Activated CD8-positive, alpha-beta T cell treated with anti-CD3 and anti-CD28 coated beads, Interleukin-2, amount 10 ng/mL, durations not matched to agents 7 days and 5 days (primary cell): ENCODE measurements at regions of chr7 and their contacts with region 1.

Region 1: DNA sequence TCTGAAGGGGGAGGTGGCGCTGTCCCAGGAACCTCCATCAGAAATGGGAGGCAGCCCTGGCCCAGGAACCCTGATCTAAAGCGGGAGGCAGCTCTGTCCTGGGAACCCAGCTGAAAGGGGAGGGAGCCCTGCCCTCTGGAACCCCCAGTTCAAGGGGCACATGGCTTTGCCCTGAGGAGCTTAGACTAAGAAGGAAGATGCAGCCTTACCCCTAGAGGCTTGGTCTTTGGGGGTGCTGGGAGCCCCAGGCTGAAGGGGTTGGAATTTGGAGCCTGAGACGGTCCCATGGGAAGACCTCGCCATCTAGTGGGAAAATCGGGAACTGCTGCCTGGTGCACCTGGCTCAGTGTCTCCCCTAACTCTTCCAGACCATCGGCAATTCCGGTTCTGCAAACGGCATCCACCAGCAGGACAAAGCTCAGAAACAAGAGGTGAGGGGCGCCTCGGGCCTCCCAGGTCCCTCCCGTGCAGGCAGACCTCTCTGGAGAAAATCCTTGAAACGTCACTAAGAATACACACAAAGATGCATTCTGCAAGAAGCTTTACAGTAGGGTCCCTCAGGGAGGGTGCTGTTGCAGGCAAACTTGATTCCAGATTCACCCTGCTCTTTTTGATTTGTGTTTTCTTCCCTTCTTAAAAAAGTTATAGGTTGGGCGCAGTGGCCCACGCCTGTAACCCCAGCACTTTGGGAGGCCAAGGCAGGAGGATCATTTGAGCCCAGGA is 52.4 kb upstream of the GTF2IRD1 start:
- DNase-seq: peak; percentile 78
- ATAC-seq: peak; percentile 59
- H3K4me3 Mint-ChIP-seq: no peak overlapping the region
- H3K27ac Mint-ChIP-seq: no peak overlapping the region
- H3K4me1 Mint-ChIP-seq: no peaks in the 10 kb centered on the region
- H3K27me3 Mint-ChIP-seq: no peaks in the 10 kb centered on the region

Region 2: GRCh38 chr7:74068393-74069085 is 332.8 kb before region 1 on chr7:
- CTCF ChIA-PET with region 1: interaction called, 13 read pairs
- POLR2A ChIA-PET with region 1: no interaction called
- DNase-seq: no peak
- ATAC-seq: no peak
- H3K4me3 Mint-ChIP-seq: no peak overlapping the region
- H3K27ac Mint-ChIP-seq: no peak overlapping the region
- H3K4me1 Mint-ChIP-seq: peaks cover 7% of the 10 kb centered on the region
- H3K27me3 Mint-ChIP-seq: no peaks in the 10 kb centered on the region

Region 3: GRCh38 chr7:74217455-74218342 is 183.6 kb before region 1 on chr7:
- CTCF ChIA-PET with region 1: interaction called, 13 read pairs
- POLR2A ChIA-PET with region 1: no interaction called
- DNase-seq: peak; percentile 63
- ATAC-seq: peak; percentile 60
- H3K4me3 Mint-ChIP-seq: peak overlapping the region; percentile 49
- H3K27ac Mint-ChIP-seq: peak overlapping the region; percentile 96
- H3K4me1 Mint-ChIP-seq: peaks cover 42% of the 10 kb centered on the region
- H3K27me3 Mint-ChIP-seq: no peaks in the 10 kb centered on the region

Region 4: GRCh38 chr7:74275401-74275881 is 125.9 kb before region 1 on chr7:
- CTCF ChIA-PET with region 1: interaction called, 20 read pairs
- POLR2A ChIA-PET with region 1: no interaction called
- DNase-seq: no peak
- ATAC-seq: no peak
- H3K4me3 Mint-ChIP-seq: no peak overlapping the region
- H3K27ac Mint-ChIP-seq: no peak overlapping the region
- H3K4me1 Mint-ChIP-seq: peaks cover 18% of the 10 kb centered on the region
- H3K27me3 Mint-ChIP-seq: no peaks in the 10 kb centered on the region

Region 5: GRCh38 chr7:74364061-74364460 is 37.2 kb before region 1 on chr7:
- CTCF ChIA-PET with region 1: no interaction called
- POLR2A ChIA-PET with region 1: no interaction called
- DNase-seq: no peak
- ATAC-seq: no peak
- H3K4me3 Mint-ChIP-seq: no peak overlapping the region
- H3K27ac Mint-ChIP-seq: no peak overlapping the region
- H3K4me1 Mint-ChIP-seq: no peaks in the 10 kb centered on the region
- H3K27me3 Mint-ChIP-seq: no peaks in the 10 kb centered on the region

Region 6: DNA sequence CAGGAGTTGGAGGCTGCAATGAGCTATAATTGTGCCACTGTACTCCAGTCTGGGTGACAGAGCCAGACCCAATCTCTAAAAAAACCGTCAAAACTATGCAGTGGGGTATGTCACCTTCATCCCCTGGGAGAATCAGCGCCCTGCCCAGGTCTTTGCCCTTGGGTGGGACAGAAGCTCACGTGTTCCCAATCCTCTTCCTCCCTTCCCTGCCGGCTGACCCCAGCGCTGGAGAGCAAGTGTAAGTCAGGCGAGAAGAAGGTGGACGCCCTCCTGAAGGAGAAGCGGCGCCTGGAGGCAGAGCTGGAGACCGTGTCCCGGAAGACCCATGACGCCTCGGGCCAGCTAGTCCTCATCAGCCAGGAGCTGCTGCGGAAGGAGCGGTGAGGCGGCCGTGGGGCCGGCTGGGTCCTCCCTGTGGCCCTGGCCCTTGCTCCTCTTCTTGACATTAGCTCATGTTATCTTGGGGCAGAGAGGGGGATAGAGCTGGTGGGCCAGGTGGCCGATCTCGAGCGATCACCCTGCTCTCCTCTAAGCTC is 12.3 kb before region 1 on chr7:
- CTCF ChIA-PET with region 1: interaction called, 15 read pairs
- POLR2A ChIA-PET with region 1: no interaction called
- DNase-seq: no peak
- ATAC-seq: no peak
- H3K4me3 Mint-ChIP-seq: no peak overlapping the region
- H3K27ac Mint-ChIP-seq: no peak overlapping the region
- H3K4me1 Mint-ChIP-seq: peaks cover 2% of the 10 kb centered on the region
- H3K27me3 Mint-ChIP-seq: no peaks in the 10 kb centered on the region

Region 7: GRCh38 chr7:74417419-74417971 is 16.2 kb after region 1 on chr7:
- CTCF ChIA-PET with region 1: interaction called, 10 read pairs
- POLR2A ChIA-PET with region 1: no interaction called
- DNase-seq: peak; percentile 61
- ATAC-seq: peak; percentile 76
- H3K4me3 Mint-ChIP-seq: no peak overlapping the region
- H3K27ac Mint-ChIP-seq: no peak overlapping the region
- H3K4me1 Mint-ChIP-seq: no peaks in the 10 kb centered on the region
- H3K27me3 Mint-ChIP-seq: no peaks in the 10 kb centered on the region

Region 8: DNA sequence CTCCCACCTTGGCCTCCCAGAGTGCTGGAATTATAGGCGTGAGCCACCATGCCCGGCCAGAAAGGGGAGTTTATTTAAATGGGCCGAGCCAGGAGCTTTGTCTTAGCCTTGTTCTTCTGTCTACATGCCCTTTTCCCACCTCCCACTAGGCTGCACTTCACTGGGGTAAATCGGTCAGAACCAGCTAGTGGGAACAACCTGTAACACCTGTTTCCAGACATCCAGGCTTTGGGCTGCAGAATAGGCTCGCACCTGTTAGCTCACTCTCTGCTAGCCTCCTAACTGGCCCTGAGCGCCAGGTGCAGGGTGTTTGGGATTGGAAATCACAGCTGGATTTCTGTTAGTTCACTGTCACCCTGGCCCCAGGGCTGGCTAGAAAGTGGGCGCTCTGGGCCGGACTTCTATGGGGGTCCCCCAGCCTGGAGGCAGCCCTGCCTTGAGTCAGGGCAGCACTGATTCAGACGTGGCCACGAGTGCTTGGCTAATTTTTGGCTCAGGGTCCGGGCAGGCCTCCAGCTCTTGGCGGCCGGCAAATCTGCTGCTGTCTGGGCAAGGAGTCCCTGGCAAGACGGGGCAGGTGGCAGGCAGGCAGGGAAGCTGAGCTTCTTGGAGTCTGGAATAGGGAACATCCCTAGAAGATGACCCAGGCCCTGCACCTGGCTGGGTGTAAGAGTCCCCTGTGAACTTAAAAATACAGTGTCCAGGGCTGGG is 101.0 kb after region 1 on chr7:
- CTCF ChIA-PET with region 1: no interaction called
- POLR2A ChIA-PET with region 1: no interaction called
- DNase-seq: no peak
- ATAC-seq: no peak
- H3K4me3 Mint-ChIP-seq: no peak overlapping the region
- H3K27ac Mint-ChIP-seq: no peak overlapping the region
- H3K4me1 Mint-ChIP-seq: no peaks in the 10 kb centered on the region
- H3K27me3 Mint-ChIP-seq: no peaks in the 10 kb centered on the region

Region 9: DNA sequence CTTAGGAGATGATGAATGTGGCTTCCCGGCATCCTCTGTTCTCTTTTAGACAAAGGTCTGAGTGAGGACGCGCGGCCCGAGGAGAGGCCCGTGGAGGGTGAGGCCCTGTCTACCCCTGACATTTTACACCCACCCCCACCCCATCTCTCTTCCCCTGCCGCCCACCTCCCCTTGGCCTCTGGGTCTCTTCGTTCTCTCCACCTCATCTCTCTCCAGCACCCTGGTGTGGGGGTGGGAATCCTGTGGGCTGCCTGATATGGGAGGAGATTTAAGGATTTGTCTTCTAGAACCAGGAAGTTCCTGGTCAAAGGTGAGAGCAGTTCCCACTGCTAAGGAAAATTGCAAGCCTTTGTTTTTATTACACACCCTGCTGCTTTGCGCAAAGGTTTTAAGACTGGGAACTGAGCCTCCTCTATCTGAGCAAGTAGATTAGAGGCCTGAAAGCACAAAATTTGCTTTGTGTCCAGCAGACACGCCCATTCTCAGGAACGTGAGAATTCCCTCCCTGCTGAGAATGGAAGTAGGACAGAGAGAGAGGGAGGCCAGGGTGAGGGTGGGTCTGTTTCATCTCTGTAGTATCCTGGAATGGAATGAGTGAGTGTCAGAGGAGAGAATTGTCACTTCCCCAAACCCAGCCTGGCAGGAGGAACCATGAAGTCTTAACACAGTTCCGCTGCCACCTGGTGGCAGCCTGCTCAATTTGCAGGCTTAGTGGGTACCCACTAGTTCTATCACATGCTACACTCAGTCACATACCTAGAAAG is 143.6 kb after region 1 on chr7:
- CTCF ChIA-PET with region 1: no interaction called
- POLR2A ChIA-PET with region 1: no interaction called
- DNase-seq: peak; percentile 28
- ATAC-seq: no peak
- H3K4me3 Mint-ChIP-seq: no peak overlapping the region
- H3K27ac Mint-ChIP-seq: no peak overlapping the region
- H3K4me1 Mint-ChIP-seq: no peaks in the 10 kb centered on the region
- H3K27me3 Mint-ChIP-seq: no peaks in the 10 kb centered on the region

Region 10: DNA sequence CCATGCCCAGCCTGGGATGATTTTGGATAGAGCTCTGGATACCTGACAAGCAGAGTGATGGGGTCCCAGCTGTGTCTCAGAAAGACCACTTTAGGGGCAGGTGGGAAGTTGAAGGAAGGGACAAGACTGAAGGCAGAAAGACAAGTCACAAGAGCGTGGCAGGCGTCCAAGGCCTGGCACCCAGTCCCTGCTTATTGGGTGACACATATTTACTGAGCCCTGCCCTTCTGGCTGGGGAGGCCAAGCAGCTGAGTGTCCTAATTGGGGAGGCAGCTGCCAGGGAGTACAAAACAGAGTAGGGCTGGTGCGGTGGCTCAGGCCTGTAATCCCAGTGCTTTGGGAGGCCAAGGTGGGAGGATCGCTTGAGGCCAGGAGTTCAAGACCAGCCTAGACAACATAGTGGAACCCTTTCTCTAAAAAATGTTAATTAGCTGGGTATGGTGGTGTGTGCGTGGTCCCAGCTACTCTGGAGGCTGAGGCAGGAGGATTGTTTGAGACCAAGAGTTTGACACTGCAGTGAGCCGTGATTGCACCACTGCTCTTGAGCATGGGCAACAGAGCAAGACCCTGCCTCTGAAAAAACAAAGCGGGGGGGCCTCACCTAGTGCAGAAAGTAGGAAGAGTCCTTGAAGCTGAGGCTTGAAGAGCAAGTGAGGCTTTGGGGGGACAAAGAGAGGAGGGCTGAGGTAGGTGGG is 203.2 kb after region 1 on chr7:
- CTCF ChIA-PET with region 1: no interaction called
- POLR2A ChIA-PET with region 1: no interaction called
- DNase-seq: no peak
- ATAC-seq: no peak
- H3K4me3 Mint-ChIP-seq: no peak overlapping the region
- H3K27ac Mint-ChIP-seq: no peak overlapping the region
- H3K4me1 Mint-ChIP-seq: peaks cover 14% of the 10 kb centered on the region
- H3K27me3 Mint-ChIP-seq: peaks cover 7% of the 10 kb centered on the region